ENCODE measurements at regions of chr20 and their contacts with region 1.

Region 1: GRCh38 chr20:17968366-17969279 is at the starts of genes MGME1 and SNX5:
- DNase-seq: peak; percentile 99
- ATAC-seq: peak; percentile 87 to 97 (median 91)
- H3K4me3 ChIP-seq: peak within 1 kb of the TSS; percentile 88
- H3K4me3 Mint-ChIP-seq: peak within 1 kb of the TSS; percentile 98
- H3K27ac ChIP-seq: peak within 1 kb of the TSS; percentile 99
- H3K27ac Mint-ChIP-seq: peak within 1 kb of the TSS; percentile 95 to 98
- H3K4me1 ChIP-seq: peaks cover 40% of the 10 kb centered on the region
- H3K4me1 Mint-ChIP-seq: peaks cover 80 to 83% of the 10 kb centered on the region in 2 donors
- H3K27me3 ChIP-seq: no peaks in the 10 kb centered on the region
- H3K27me3 Mint-ChIP-seq: no peaks in the 10 kb centered on the region
- CTCF ChIP-seq: no peak
- total RNA-seq, gene MGME1: 10.3 to 25.1 (median 13.0) TPM
- total RNA-seq, gene SNX5: 62.3 to 85.4 (median 72.1) TPM

Region 2: DNA sequence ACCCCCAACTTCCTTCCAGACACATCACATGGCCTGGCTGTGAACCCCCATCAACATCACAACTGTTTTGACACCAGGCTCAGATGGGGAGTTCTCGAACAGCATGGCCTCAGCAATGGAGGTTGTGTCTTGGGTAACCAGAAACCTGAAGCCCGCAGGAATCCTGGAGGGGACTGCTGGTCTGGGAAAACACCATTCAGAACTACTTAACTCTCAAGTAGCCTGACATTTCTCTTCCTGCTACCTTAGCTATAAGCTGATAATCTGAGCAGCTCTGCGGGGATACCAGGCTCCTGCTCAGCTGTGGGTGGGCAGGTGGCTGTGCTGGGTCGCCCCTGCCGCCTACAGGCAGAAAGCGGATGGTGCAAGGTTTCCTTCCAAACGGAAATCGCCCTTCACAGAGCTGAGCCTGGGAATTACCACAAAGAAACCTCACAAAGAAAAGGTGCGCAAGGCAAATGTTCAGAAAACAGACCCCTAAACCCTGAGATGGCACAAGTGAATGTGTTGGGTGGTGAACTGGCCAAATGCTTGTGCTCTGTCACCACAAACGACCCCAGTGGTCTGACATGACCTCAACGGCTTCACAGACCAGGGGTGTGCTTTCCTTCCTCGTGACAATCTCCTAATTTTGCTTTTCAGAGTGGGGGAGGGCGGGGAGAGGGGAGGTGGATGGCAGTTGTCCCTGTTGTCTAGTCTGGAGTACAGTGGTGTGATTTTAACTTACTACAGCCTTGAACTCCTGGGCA is 29.6 kb before region 1 on chr20:
- intact Hi-C with region 1: loop called (anchors 2 kb)
- DNase-seq: peak; percentile 55 to 79
- ATAC-seq: peak; percentile 88 to 95 (median 94)
- H3K4me3 ChIP-seq: no peak overlapping the region
- H3K4me3 Mint-ChIP-seq: peak overlapping the region; percentile 50
- H3K27ac ChIP-seq: peak overlapping the region; percentile 6
- H3K27ac Mint-ChIP-seq: peak overlapping the region in 1 of 2 donors; percentile 76
- H3K4me1 ChIP-seq: peaks cover 17% of the 10 kb centered on the region
- H3K4me1 Mint-ChIP-seq: peaks cover 5 to 11% of the 10 kb centered on the region in 2 donors
- H3K27me3 ChIP-seq: no peaks in the 10 kb centered on the region
- H3K27me3 Mint-ChIP-seq: no peaks in the 10 kb centered on the region
- CTCF ChIP-seq: peak; percentile 76

Region 3: GRCh38 chr20:17949899-17950298 is 18.7 kb before region 1 on chr20:
- intact Hi-C with region 1: no loop called
- DNase-seq: no peak
- ATAC-seq: no peak
- H3K4me3 ChIP-seq: no peak overlapping the region
- H3K4me3 Mint-ChIP-seq: no peak overlapping the region
- H3K27ac ChIP-seq: no peak overlapping the region
- H3K27ac Mint-ChIP-seq: no peak overlapping the region
- H3K4me1 ChIP-seq: no peaks in the 10 kb centered on the region
- H3K4me1 Mint-ChIP-seq: peaks cover 4 to 13% of the 10 kb centered on the region in 2 donors
- H3K27me3 ChIP-seq: no peaks in the 10 kb centered on the region
- H3K27me3 Mint-ChIP-seq: no peaks in the 10 kb centered on the region
- CTCF ChIP-seq: no peak

Region 4: GRCh38 chr20:17995967-17996819 is 27.6 kb after region 1 on chr20:
- intact Hi-C with region 1: loop called (anchors 2 kb)
- DNase-seq: peak in 1 of 2 donors; percentile 80
- ATAC-seq: peak; percentile 87 to 99 (median 95)
- H3K4me3 ChIP-seq: no peak overlapping the region
- H3K4me3 Mint-ChIP-seq: no peak overlapping the region
- H3K27ac ChIP-seq: no peak overlapping the region
- H3K27ac Mint-ChIP-seq: peak overlapping the region in 1 of 2 donors; percentile 37
- H3K4me1 ChIP-seq: peaks cover 3% of the 10 kb centered on the region
- H3K4me1 Mint-ChIP-seq: peaks cover 6 to 7% of the 10 kb centered on the region in 2 donors
- H3K27me3 ChIP-seq: no peaks in the 10 kb centered on the region
- H3K27me3 Mint-ChIP-seq: peaks cover 0 to 10% of the 10 kb centered on the region in 2 donors
- CTCF ChIP-seq: peak; percentile 92

Region 5: DNA sequence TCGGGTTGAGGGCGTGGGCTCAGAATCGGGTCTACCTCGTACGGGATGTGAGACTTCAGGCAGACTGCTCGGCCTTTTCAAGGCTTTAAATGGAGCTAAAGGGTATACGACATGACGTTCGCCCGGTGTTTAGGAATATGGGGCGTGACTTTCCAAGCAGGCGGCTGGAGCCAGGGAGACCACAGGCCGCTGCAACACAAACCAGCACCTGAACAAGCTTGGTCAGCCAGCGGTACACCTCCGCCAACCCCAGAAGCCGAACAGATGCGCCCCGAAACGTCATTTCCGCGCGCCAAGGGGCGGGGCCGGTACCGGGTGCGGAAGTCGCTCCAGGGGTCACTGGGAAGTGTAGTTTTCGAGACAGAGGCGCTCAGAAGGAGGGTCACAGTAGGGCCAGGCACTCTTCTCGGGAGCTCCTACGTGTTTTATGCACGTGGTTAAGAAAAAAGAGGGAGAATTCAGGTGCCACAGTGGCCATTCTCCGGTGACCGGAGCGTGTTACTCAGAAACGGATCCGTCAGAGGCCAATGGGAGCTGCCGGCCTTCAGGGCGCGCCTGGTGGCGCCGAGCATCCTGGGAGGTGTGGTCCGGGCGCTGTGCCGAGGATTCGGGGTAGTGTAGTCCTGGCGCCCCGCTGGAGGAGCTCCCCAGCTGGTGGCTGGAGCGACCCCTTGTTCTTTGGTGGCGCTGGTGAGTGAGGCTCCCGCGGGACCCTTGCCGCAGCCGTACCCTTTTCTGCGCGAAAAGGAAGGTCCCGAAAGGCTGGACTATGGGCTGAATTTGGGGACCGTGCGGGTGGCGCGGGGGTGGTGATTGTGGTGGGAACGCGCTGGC is 319.5 kb after region 1 on chr20 and contains the start of gene ZNF133:
- intact Hi-C with region 1: loop called (anchors 2 kb)
- DNase-seq: peak; percentile 97 to 99
- ATAC-seq: peak; percentile 93 to 97 (median 95)
- H3K4me3 ChIP-seq: peak within 1 kb of the TSS; percentile 100
- H3K4me3 Mint-ChIP-seq: peak within 1 kb of the TSS; percentile 98
- H3K27ac ChIP-seq: peak within 1 kb of the TSS; percentile 100
- H3K27ac Mint-ChIP-seq: peak within 1 kb of the TSS; percentile 97
- H3K4me1 ChIP-seq: peaks cover 15% of the 10 kb centered on the region
- H3K4me1 Mint-ChIP-seq: peaks cover 28 to 37% of the 10 kb centered on the region in 2 donors
- H3K27me3 ChIP-seq: peaks cover 4% of the 10 kb centered on the region
- H3K27me3 Mint-ChIP-seq: peaks cover 26 to 35% of the 10 kb centered on the region in 2 donors
- CTCF ChIP-seq: no peak
- total RNA-seq, gene ZNF133: 5.2 to 9.6 (median 9.3) TPM

Region 6: DNA sequence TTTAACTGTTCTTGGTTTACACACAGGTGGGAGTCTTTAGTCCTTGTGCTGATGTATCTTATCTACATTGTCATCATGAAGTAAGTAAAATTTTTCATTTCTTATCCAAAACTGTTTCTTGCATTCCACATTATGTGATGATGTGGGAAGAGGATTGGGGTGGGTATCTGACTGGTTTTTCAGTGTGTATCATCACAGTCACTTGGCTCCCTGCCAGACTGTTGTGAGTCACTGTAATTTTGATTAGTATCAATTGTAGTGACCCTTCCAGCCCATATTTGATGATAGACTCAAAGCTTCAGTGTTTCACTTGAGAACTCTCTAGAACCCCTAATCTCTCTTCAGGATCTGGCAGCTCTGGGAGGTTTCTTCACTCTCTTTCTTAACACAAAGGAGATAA is 1705.0 kb after region 1 on chr20:
- intact Hi-C with region 1: no loop called
- DNase-seq: no peak
- ATAC-seq: no peak
- H3K4me3 ChIP-seq: no peak overlapping the region
- H3K4me3 Mint-ChIP-seq: no peak overlapping the region
- H3K27ac ChIP-seq: no peak overlapping the region
- H3K27ac Mint-ChIP-seq: no peak overlapping the region
- H3K4me1 ChIP-seq: no peaks in the 10 kb centered on the region
- H3K4me1 Mint-ChIP-seq: peaks cover 0 to 5% of the 10 kb centered on the region in 2 donors
- H3K27me3 ChIP-seq: no peaks in the 10 kb centered on the region
- H3K27me3 Mint-ChIP-seq: peaks cover 7 to 14% of the 10 kb centered on the region in 2 donors
- CTCF ChIP-seq: no peak